HCT116 (cell line): ENCODE measurements at regions of chr1 and their contacts with region 1.

Region 1: GRCh38 chr1:19661721-19662228 is 2.9 kb upstream of the HTR6 start:
- DNase-seq: peak; percentile 24
- ATAC-seq: no peak
- H3K4me3 ChIP-seq: no peak overlapping the region
- H3K27ac ChIP-seq: no peak overlapping the region
- H3K4me1 ChIP-seq: peaks cover 0 to 12% of the 10 kb centered on the region in 2 experiments; a peak in 2 of 4 replicates
- H3K27me3 ChIP-seq: no peaks in the 10 kb centered on the region
- CTCF ChIP-seq: peak; percentile 57 to 84 (median 83)
- POLR2A ChIP-seq: no peak
- RAD21 ChIP-seq: peak; percentile 85

Region 2: GRCh38 chr1:19563324-19564097 is 98.3 kb before region 1 on chr1:
- CTCF ChIA-PET with region 1: no interaction called
- POLR2A ChIA-PET with region 1: no interaction called
- RAD21 ChIA-PET with region 1: no interaction called
- intact Hi-C with region 1: no loop called
- DNase-seq: no peak
- ATAC-seq: no peak
- H3K4me3 ChIP-seq: no peak overlapping the region
- H3K27ac ChIP-seq: no peak overlapping the region
- H3K4me1 ChIP-seq: peaks cover 0 to 5% of the 10 kb centered on the region in 2 experiments; a peak in 1 of 4 replicates
- H3K27me3 ChIP-seq: no peaks in the 10 kb centered on the region
- CTCF ChIP-seq: no peak
- POLR2A ChIP-seq: no peak
- RAD21 ChIP-seq: no peak

Region 3: GRCh38 chr1:19577036-19577435 is 84.7 kb before region 1 on chr1:
- CTCF ChIA-PET with region 1: no interaction called
- POLR2A ChIA-PET with region 1: no interaction called
- RAD21 ChIA-PET with region 1: no interaction called
- intact Hi-C with region 1: no loop called
- DNase-seq: no peak
- ATAC-seq: no peak
- H3K4me3 ChIP-seq: no peak overlapping the region
- H3K27ac ChIP-seq: no peak overlapping the region
- H3K4me1 ChIP-seq: peaks cover 0 to 1% of the 10 kb centered on the region in 2 experiments; a peak in 1 of 4 replicates
- H3K27me3 ChIP-seq: no peaks in the 10 kb centered on the region
- CTCF ChIP-seq: no peak
- POLR2A ChIP-seq: no peak
- RAD21 ChIP-seq: no peak

Region 4: DNA sequence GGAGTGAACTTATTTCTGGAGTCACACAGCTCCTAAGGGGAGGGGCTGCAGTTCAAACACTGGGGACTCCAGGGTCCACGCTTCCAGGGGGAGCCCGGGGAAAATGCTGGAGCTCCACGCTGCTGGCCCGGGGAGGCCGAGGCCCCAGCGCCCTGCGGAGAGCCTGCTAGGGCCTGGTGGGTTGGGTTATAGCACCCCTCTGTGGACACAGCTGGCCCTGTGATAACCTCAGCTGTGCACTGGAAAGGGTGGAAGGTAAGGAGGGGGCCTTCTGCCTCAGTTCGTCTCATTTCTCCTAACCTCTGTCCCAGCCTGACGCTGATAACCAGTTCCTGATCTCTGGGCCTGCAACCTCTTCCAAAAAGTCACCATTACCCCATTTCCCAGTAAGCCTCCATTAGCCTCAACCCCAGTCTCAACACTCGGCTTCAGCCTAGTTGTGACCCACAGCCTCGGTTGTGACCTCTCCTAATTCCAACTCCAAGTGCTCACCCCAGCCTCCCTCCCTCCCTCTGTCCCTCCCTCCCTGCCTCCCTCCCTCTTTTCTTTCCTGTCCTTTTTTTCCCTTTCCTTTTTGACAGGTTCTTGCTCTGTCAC is 10.5 kb before region 1 on chr1:
- CTCF ChIA-PET with region 1: interaction called, 15 read pairs
- POLR2A ChIA-PET with region 1: no interaction called
- RAD21 ChIA-PET with region 1: no interaction called
- intact Hi-C with region 1: no loop called
- DNase-seq: no peak
- ATAC-seq: peak; percentile 53
- H3K4me3 ChIP-seq: no peak overlapping the region
- H3K27ac ChIP-seq: no peak overlapping the region
- H3K4me1 ChIP-seq: peaks cover 17 to 42% of the 10 kb centered on the region in 2 experiments
- H3K27me3 ChIP-seq: no peaks in the 10 kb centered on the region
- CTCF ChIP-seq: peak; percentile 49 to 66 (median 55); a peak in 5 of 6 replicates
- POLR2A ChIP-seq: no peak
- RAD21 ChIP-seq: peak; percentile 82

Region 5: GRCh38 chr1:19704247-19705113 is 42.7 kb after region 1 on chr1:
- CTCF ChIA-PET with region 1: interaction called, 70 read pairs
- POLR2A ChIA-PET with region 1: no interaction called
- RAD21 ChIA-PET with region 1: interaction called, 3 to 8 read pairs
- intact Hi-C with region 1: loop called (anchors 5 kb)
- DNase-seq: peak; percentile 28
- ATAC-seq: peak; percentile 98
- H3K4me3 ChIP-seq: no peak overlapping the region
- H3K27ac ChIP-seq: no peak overlapping the region
- H3K4me1 ChIP-seq: peaks cover 0 to 3% of the 10 kb centered on the region in 2 experiments; a peak in 1 of 4 replicates
- H3K27me3 ChIP-seq: no peaks in the 10 kb centered on the region
- CTCF ChIP-seq: peak; percentile 67 to 93 (median 91)
- POLR2A ChIP-seq: no peak
- RAD21 ChIP-seq: peak; percentile 61

Region 6: GRCh38 chr1:19728413-19729145 is 66.8 kb after region 1 on chr1:
- CTCF ChIA-PET with region 1: no interaction called
- POLR2A ChIA-PET with region 1: no interaction called
- RAD21 ChIA-PET with region 1: no interaction called
- intact Hi-C with region 1: no loop called
- DNase-seq: no peak
- ATAC-seq: no peak
- H3K4me3 ChIP-seq: no peak overlapping the region
- H3K27ac ChIP-seq: no peak overlapping the region
- H3K4me1 ChIP-seq: no peaks in the 10 kb centered on the region
- H3K27me3 ChIP-seq: no peaks in the 10 kb centered on the region
- CTCF ChIP-seq: no peak
- POLR2A ChIP-seq: no peak
- RAD21 ChIP-seq: no peak

Region 7: GRCh38 chr1:19811206-19811851 is 149.6 kb after region 1 on chr1:
- CTCF ChIA-PET with region 1: no interaction called
- POLR2A ChIA-PET with region 1: no interaction called
- RAD21 ChIA-PET with region 1: no interaction called
- intact Hi-C with region 1: loop called (anchors 5 kb)
- DNase-seq: peak; percentile 34
- ATAC-seq: peak; percentile 94
- H3K4me3 ChIP-seq: no peak overlapping the region
- H3K27ac ChIP-seq: no peak overlapping the region
- H3K4me1 ChIP-seq: no peaks in the 10 kb centered on the region; a peak in 1 of 4 replicates
- H3K27me3 ChIP-seq: no peaks in the 10 kb centered on the region
- CTCF ChIP-seq: peak; percentile 64 to 75 (median 69); a peak in 5 of 6 replicates
- POLR2A ChIP-seq: no peak
- RAD21 ChIP-seq: peak; percentile 63

Region 8: DNA sequence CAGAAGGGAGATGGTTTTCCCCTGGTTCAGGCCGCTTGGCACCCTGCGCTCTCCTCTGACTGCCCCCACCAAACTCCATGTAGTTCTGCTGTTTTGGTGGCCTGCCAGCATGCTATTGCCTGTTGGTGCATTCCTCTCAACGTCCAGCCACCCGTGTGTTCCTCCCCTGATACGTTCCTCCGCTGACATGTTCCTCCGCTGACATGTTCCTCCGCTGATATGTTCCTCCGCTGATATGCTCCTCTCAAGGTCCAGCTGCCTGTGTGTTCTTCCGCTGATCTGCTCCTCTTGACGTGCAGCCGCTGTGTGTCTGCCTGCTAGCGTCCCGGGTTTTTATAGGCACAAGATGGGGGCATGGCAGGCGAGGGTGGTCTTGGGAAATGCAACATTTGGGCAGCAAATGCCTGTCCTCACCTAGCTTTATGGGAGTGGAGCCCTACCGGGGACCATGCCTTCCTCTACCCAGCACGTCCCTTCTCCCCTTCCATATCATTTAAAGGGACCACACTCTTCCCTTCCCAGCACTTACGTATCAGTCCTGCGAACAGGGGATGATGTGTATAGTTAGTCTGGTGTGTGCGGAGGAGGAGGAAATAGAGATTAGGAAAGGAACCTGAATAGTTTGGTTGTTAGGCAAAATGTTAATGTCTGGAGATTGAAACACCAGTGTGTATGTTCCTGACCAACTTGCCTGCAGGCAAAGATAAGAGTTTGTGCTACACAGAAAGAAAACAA is 367.6 kb after region 1 on chr1:
- CTCF ChIA-PET with region 1: no interaction called
- POLR2A ChIA-PET with region 1: no interaction called
- RAD21 ChIA-PET with region 1: no interaction called
- intact Hi-C with region 1: no loop called
- DNase-seq: no peak
- ATAC-seq: no peak
- H3K4me3 ChIP-seq: no peak overlapping the region
- H3K27ac ChIP-seq: no peak overlapping the region
- H3K4me1 ChIP-seq: no peaks in the 10 kb centered on the region
- H3K27me3 ChIP-seq: no peaks in the 10 kb centered on the region
- CTCF ChIP-seq: no peak
- POLR2A ChIP-seq: no peak
- RAD21 ChIP-seq: no peak

Region 9: DNA sequence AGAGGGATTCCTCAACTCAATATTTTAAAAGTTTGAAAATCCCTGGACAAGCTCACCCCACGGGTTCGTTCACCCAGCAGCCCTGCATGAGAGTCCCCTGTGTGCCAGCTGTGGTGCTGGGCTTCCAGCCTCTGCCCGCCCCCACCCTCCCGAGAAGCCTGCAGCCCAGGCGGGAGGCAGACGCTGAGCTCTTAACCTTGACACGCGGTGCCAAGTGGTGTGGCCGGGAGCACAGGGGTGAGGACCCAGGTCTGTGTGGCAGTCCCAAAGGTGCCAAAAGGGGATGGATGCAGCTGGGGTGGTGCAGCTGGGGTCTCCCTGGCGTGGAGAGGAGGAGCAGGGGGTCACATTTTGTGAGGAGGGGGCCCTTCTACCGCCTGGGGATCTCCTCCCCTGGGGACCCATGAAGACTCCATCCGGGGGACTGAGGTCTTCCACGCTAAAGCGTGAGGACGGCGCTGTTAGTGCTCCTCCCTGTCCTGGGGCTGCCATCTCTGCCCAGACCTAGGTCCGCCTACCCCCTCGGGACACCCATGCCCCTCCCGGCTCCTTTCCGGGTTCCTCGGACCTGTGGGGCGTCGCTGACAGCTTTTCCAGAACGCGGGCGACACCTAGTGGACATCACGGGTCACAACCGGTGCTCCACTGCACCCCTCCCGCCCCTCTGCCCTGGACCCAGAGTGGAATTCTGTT is 490.3 kb after region 1 on chr1:
- CTCF ChIA-PET with region 1: interaction called, 3 read pairs
- POLR2A ChIA-PET with region 1: no interaction called
- RAD21 ChIA-PET with region 1: no interaction called
- intact Hi-C with region 1: loop called (anchors 5 kb)
- DNase-seq: peak; percentile 26
- ATAC-seq: peak; percentile 99
- H3K4me3 ChIP-seq: no peak overlapping the region
- H3K27ac ChIP-seq: no peak overlapping the region
- H3K4me1 ChIP-seq: peaks cover 0 to 5% of the 10 kb centered on the region in 2 experiments; a peak in 2 of 4 replicates
- H3K27me3 ChIP-seq: no peaks in the 10 kb centered on the region
- CTCF ChIP-seq: peak; percentile 67 to 94 (median 93)
- POLR2A ChIP-seq: no peak
- RAD21 ChIP-seq: peak; percentile 99